MCF 10A (cell line): ENCODE measurements at regions of chr5 and their contacts with region 1.

Region 1: DNA sequence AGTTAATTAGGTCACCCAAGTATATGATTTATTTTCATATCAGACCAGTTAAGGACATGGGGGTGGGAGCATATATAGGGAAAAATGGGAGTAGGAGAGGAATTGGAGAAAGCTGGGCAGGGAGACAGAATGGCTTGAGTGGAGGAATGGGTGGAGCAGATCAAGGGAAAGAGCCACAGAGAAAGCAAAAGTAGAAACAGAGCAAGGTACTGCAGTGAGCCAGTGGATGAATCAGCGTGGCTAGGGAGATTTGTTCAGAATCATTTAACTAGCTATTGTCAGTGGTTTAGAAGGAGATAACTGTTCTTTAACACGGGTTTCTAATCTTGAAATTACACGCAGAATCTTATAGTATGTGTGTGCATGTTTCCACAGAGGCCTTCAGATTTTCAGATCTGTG is 37.4 kb downstream of the SNX24 start:
- DNase-seq: peak; percentile 39
- H3K4me3 Mint-ChIP-seq: peak overlapping the region; percentile 2
- H3K27ac Mint-ChIP-seq: peak overlapping the region; percentile 8
- H3K4me1 Mint-ChIP-seq: peaks cover 24% of the 10 kb centered on the region
- H3K27me3 Mint-ChIP-seq: no peaks in the 10 kb centered on the region
- CTCF ChIP-seq: no peak

Region 2: DNA sequence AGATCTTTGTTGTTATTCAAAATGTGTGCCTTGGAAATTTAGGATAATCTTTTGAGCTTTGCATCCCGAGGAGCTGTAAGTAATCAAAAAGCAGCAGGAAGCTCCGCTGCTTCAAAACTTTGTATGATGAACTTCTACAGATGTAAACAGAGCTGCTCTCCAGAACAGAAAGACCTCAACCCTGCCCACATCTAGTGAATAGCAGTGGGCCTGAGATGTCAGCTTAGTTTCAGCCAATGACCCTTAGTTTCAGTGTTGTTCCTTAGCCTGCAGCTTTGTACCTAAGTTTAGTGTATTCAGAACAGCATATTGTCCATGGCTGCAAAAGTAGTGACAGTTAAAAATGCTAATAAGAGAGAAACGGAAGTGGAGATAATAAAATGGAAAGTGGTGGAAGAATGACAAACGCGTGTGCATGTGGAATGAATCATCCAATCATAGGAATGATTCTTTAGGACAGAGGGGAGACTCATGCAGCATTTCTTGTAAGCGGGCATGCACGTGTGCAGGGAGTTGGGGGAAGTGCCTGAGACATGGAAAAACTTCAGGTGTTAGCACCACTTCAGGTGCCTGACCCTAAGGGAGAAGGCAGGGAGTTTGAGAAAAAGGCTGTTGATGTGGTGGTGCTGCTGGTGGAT is 12.5 kb before region 1 on chr5:
- CTCF ChIA-PET with region 1: interaction called, 11 read pairs
- POLR2A ChIA-PET with region 1: interaction called, 9 read pairs
- intact Hi-C with region 1: no loop called
- DNase-seq: no peak
- H3K4me3 Mint-ChIP-seq: no peak overlapping the region
- H3K27ac Mint-ChIP-seq: no peak overlapping the region
- H3K4me1 Mint-ChIP-seq: peaks cover 13% of the 10 kb centered on the region
- H3K27me3 Mint-ChIP-seq: no peaks in the 10 kb centered on the region
- CTCF ChIP-seq: no peak